Activated T-helper 1 cell treated with anti-CD3 and anti-CD28 coated beads, Interleukin-12 subunit alpha, Interleukin-12 subunit beta, Interleukin-2, Interleukin-4 antibody, amounts not matched to agents 30 ng/mL and 10 ng/mL and 1 ng/mL, durations not matched to agents 14 hours and 24 hours and 36 hours (primary cell): ENCODE measurements at regions of chr19 and their contacts with region 1.

Region 1: DNA sequence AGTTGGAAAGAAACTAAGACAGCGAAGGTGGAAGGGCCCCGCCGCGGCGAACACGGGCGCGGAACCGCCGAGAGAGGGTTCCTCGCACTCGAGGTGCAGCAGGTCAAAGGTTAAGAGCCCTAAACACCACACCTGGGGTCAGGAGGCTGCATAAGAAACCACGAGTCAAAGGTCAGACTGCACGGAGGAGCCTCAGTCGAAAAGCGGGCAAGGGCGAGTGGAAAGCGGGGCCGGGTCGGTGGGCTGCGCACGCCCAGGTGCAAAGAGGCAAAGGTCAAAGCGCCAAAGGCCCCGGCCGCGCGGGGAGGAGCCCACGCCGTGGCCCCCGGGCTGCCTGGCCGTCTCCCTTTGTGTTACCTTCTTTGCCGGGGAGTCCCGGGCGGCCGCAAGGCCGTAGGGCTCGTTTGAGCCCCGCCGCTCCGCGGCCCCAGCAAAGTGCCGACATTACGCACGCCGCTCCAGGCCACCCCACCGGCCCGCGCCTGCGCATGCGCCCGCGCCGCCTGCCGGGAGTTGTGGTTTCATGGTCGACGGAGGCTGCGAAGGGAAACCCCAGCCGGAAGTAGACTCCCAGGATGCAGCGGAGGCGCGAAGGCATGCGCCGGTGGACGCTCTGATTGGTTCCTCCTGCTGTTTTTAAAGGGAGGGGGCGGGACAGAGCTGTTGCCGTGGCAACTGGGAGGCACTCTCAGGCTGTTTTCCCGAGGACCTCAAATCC is at the start of gene POLRMT:
- DNase-seq: peak; percentile 96
- H3K4me3 Mint-ChIP-seq: peak within 1 kb of the TSS; percentile 96
- H3K27ac Mint-ChIP-seq: peak within 1 kb of the TSS; percentile 95
- H3K4me1 Mint-ChIP-seq: peaks cover 6% of the 10 kb centered on the region
- H3K27me3 Mint-ChIP-seq: no peaks in the 10 kb centered on the region
- total RNA-seq, gene POLRMT: 103 and 104 TPM in 2 replicates

Region 2: DNA sequence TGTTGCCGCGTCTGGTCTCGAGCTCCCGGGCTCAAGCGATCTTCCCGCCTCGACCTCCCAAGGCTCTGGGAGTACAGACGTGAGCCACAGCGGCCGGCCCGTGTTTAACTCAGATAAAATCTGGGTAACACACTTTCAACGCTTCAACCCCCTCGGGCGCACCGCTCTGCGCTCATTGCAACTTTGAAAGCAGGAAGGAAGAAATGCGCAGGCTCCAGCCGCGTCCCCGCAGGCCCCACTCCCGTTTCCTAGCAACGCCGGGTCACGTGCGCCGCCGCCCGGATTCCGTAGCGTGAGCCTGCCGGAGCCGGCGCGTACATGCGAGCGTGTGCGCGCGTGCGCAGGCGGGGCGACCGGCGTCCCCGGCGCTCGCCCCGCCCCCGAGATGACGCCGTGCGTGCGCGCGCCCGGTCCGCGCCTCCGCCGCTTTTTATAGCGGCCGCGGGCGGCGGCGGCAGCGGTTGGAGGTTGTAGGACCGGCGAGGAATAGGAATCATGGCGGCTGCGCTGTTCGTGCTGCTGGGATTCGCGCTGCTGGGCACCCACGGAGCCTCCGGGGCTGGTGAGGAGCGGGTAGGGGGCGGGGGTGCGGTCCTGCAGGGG is 61.0 kb before region 1 on chr19 and contains the start of gene BSG:
- intact Hi-C with region 1: loop called (anchors 1 kb)
- DNase-seq: peak; percentile 99
- H3K4me3 Mint-ChIP-seq: peak within 1 kb of the TSS; percentile 88
- H3K27ac Mint-ChIP-seq: peak within 1 kb of the TSS; percentile 99
- H3K4me1 Mint-ChIP-seq: peaks cover 25% of the 10 kb centered on the region
- H3K27me3 Mint-ChIP-seq: peaks cover 6% of the 10 kb centered on the region
- total RNA-seq, gene BSG: 307 and 308 TPM in 2 replicates

Region 3: DNA sequence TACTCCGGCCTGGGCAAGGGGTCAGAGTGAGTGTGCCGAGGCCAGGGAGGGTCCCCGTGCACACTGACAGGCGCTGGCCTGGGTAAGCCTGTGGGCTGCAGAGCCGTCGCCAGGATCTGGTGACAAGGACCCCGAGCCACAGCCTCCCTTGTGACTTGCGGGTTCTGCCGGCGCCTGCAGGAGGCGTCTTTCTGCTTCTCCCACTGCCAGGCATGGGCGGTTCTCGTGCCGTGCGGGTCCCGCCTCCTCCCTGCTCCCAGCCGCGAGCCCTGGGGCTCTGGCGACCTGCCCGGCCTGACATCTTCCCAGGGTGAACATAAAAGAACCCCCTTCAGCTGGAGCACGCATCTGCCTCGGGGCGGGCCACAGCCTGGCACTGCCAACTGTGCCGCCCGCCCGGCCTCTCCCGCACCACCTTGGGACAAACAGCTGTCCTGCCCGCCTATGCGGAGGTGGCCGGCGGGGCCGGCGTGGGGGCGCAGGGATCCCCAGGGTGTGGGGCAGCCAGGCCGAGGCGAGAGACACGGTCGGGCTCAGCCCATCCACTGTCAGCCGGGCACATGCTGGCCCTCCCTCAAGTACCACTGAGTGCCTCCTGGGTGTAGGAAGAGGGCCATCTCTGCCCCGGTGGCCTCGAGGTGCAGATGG is 45.0 kb before region 1 on chr19:
- intact Hi-C with region 1: loop called (anchors 5 kb)
- DNase-seq: peak; percentile 38
- H3K4me3 Mint-ChIP-seq: no peak overlapping the region
- H3K27ac Mint-ChIP-seq: no peak overlapping the region
- H3K4me1 Mint-ChIP-seq: no peaks in the 10 kb centered on the region
- H3K27me3 Mint-ChIP-seq: peaks cover 15% of the 10 kb centered on the region

Region 4: GRCh38 chr19:610801-611505 is 22.3 kb before region 1 on chr19:
- intact Hi-C with region 1: loop called (anchors 1 kb)
- DNase-seq: peak; percentile 56
- H3K4me3 Mint-ChIP-seq: peak overlapping the region; percentile 87
- H3K27ac Mint-ChIP-seq: peak overlapping the region; percentile 98
- H3K4me1 Mint-ChIP-seq: peaks cover 14% of the 10 kb centered on the region
- H3K27me3 Mint-ChIP-seq: no peaks in the 10 kb centered on the region

Region 5: GRCh38 chr19:646479-647333 is 13.5 kb after region 1 on chr19:
- intact Hi-C with region 1: no loop called
- DNase-seq: no peak
- H3K4me3 Mint-ChIP-seq: no peak overlapping the region
- H3K27ac Mint-ChIP-seq: no peak overlapping the region
- H3K4me1 Mint-ChIP-seq: no peaks in the 10 kb centered on the region
- H3K27me3 Mint-ChIP-seq: no peaks in the 10 kb centered on the region